MCF 10A (cell line): ENCODE measurements at regions of chr7 and their contacts with region 1.

Region 1: GRCh38 chr7:13628239-13629001 is 361.0 kb downstream of the ETV1 start:
- DNase-seq: peak; percentile 19
- H3K4me3 Mint-ChIP-seq: no peak overlapping the region
- H3K27ac Mint-ChIP-seq: no peak overlapping the region
- H3K4me1 Mint-ChIP-seq: no peaks in the 10 kb centered on the region
- H3K27me3 Mint-ChIP-seq: no peaks in the 10 kb centered on the region
- CTCF ChIP-seq: no peak

Region 2: GRCh38 chr7:13717031-13717430 is 88.6 kb after region 1 on chr7:
- CTCF ChIA-PET with region 1: no interaction called
- POLR2A ChIA-PET with region 1: no interaction called
- intact Hi-C with region 1: loop called (anchors 10 kb)
- DNase-seq: no peak
- H3K4me3 Mint-ChIP-seq: no peak overlapping the region
- H3K27ac Mint-ChIP-seq: no peak overlapping the region
- H3K4me1 Mint-ChIP-seq: no peaks in the 10 kb centered on the region
- H3K27me3 Mint-ChIP-seq: no peaks in the 10 kb centered on the region
- CTCF ChIP-seq: no peak